MCF 10A (cell line): ENCODE measurements at regions of chr6 and their contacts with region 1.

Region 1: DNA sequence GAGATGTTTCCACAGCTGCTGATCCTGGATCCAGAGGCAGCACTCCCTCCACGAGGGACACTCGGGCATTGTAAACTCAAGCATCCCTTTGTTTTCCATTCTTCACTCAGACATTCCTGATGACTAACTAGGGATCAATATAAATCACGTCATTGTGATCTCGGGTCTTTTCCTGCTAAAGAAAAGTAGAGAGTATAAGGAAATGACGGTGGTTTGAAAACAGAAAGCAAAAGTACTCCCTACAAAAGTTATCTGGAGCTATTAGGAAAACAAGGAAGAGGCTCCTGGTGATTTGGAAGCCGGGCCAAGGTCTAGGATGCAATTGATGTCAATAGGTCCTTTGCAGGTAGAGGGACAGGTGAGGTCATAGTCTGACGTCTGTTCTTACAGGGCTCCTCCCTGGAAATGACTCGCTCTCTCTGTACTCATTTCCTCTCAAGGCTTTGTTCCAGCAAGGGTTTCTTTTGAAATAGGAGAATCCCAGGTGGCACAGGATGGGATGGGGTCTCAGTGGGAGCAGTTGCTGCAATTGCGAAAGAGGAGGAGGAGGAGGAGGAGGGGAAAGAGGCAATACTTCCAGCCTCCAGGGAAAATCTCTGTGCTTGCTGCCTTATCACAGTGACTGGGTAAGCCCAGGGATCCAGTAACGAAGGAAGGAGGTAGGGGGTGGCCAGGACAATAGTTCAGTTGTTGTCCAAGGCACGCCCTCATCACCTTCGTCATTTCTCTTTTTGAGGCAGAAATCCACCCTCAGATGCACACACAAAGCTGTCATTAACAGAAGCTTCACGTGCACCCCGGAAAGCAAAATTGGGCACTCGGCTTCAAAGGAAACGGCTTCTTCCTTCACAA is 222.9 kb downstream of the LY86 start:
- DNase-seq: peak; percentile 98
- H3K4me3 Mint-ChIP-seq: peak overlapping the region; percentile 48
- H3K27ac Mint-ChIP-seq: peak overlapping the region; percentile 80
- H3K4me1 Mint-ChIP-seq: peaks cover 28% of the 10 kb centered on the region
- H3K27me3 Mint-ChIP-seq: no peaks in the 10 kb centered on the region
- CTCF ChIP-seq: no peak

Region 2: GRCh38 chr6:6793388-6794250 is 17.8 kb before region 1 on chr6:
- CTCF ChIA-PET with region 1: no interaction called
- POLR2A ChIA-PET with region 1: interaction called, 11 read pairs
- intact Hi-C with region 1: no loop called
- DNase-seq: no peak
- H3K4me3 Mint-ChIP-seq: no peak overlapping the region
- H3K27ac Mint-ChIP-seq: peak overlapping the region; percentile 11
- H3K4me1 Mint-ChIP-seq: peaks cover 29% of the 10 kb centered on the region
- H3K27me3 Mint-ChIP-seq: no peaks in the 10 kb centered on the region
- CTCF ChIP-seq: no peak

Region 3: DNA sequence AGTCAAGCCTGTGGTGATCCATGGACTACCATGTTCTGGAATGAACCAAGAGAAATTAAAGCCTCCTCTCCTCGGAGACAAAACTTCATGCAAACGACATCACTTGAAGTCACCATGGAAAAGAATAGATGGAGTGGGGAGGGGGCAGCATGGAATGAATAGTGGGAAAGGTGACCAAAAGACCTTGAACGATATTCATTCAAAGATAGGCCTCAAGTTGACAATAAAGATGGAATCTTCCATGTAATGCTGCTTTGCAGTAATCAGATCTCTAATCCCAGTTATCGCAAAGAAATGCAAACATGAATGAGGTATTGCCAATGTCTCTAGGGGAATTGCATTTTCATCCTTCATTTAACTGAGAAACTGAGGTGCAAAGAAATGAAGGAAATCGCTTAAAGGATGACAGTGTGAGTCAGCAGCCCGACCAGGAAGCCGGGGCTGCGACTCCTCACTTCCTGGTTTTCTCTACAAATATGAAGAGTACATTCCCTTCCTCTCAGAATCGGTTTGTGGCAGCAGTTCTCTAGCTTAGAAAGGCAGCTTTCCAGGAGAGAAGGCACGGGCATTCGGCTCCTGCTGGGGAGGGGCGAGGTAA is 230.8 kb after region 1 on chr6:
- CTCF ChIA-PET with region 1: no interaction called
- POLR2A ChIA-PET with region 1: no interaction called
- intact Hi-C with region 1: no loop called
- DNase-seq: no peak
- H3K4me3 Mint-ChIP-seq: no peak overlapping the region
- H3K27ac Mint-ChIP-seq: no peak overlapping the region
- H3K4me1 Mint-ChIP-seq: no peaks in the 10 kb centered on the region
- H3K27me3 Mint-ChIP-seq: no peaks in the 10 kb centered on the region
- CTCF ChIP-seq: no peak